ENCODE measurements at regions of chr12 and their contacts with region 1.

Region 1: GRCh38 chr12:26748741-26749431 is 84.1 kb downstream of the ITPR2 start:
- DNase-seq: peak; percentile 86
- ATAC-seq: peak; percentile 56
- H3K4me3 ChIP-seq: peak overlapping the region; percentile 32; the same call in 1 of the 2 replicates
- H3K27ac ChIP-seq: peak overlapping the region; percentile 91
- H3K4me1 ChIP-seq: peaks cover 64% of the 10 kb centered on the region
- H3K27me3 ChIP-seq: no peaks in the 10 kb centered on the region
- CTCF ChIP-seq: no peak
- EP300 ChIP-seq: peak; percentile 4 to 80
- POLR2A ChIP-seq: no peak
- RAD21 ChIP-seq: no peak

Region 2: DNA sequence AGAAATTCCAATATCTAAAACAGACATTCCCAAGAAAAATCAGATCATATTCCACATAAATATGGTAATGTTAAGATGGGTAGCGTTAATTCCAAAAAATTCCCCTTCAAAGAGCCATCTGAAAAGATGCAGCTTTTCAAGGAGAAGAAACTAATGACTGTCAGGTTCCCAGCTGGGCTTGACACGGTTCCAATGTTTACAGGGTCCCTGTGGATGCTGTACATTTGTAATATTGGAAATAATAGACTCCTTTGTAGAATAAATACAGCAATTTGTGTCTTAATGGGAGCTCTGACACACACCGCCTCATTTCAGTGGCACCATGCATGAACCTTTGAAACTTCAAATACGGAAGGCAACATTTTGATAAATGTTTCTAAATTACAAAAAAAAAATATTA is 56.5 kb before region 1 on chr12:
- CTCF ChIA-PET with region 1: no interaction called
- POLR2A ChIA-PET with region 1: no interaction called
- RAD21 ChIA-PET with region 1: no interaction called
- SMC1A ChIA-PET with region 1: no interaction called
- in situ Hi-C with region 1: no loop called
- intact Hi-C with region 1: no loop called
- DNase-seq: no peak
- ATAC-seq: no peak
- H3K4me3 ChIP-seq: no peak overlapping the region
- H3K27ac ChIP-seq: no peak overlapping the region
- H3K4me1 ChIP-seq: no peaks in the 10 kb centered on the region
- H3K27me3 ChIP-seq: no peaks in the 10 kb centered on the region
- CTCF ChIP-seq: no peak
- EP300 ChIP-seq: no peak
- POLR2A ChIP-seq: no peak
- RAD21 ChIP-seq: no peak

Region 3: GRCh38 chr12:26713885-26714383 is 35.0 kb before region 1 on chr12:
- CTCF ChIA-PET with region 1: interaction called, 5 read pairs
- POLR2A ChIA-PET with region 1: interaction called, 7 read pairs
- RAD21 ChIA-PET with region 1: interaction called, 14 read pairs
- SMC1A ChIA-PET with region 1: interaction called, 11 read pairs
- in situ Hi-C with region 1: no loop called
- intact Hi-C with region 1: no loop called
- DNase-seq: peak; percentile 48
- ATAC-seq: peak; percentile 87
- H3K4me3 ChIP-seq: no peak overlapping the region
- H3K27ac ChIP-seq: peak overlapping the region; percentile 69
- H3K4me1 ChIP-seq: peaks cover 22% of the 10 kb centered on the region
- H3K27me3 ChIP-seq: no peaks in the 10 kb centered on the region
- CTCF ChIP-seq: no peak
- EP300 ChIP-seq: peak in 1 of 2 experiments; percentile 74; a peak in 2 of 4 replicates
- POLR2A ChIP-seq: no peak
- RAD21 ChIP-seq: no peak

Region 4: GRCh38 chr12:26723379-26724308 is 25.2 kb before region 1 on chr12:
- CTCF ChIA-PET with region 1: interaction called, 3 read pairs
- POLR2A ChIA-PET with region 1: interaction called, 14 read pairs
- RAD21 ChIA-PET with region 1: interaction called, 16 read pairs
- SMC1A ChIA-PET with region 1: interaction called, 96 read pairs
- in situ Hi-C with region 1: no loop called
- intact Hi-C with region 1: loop called (anchors 2 kb)
- DNase-seq: no peak
- ATAC-seq: peak; percentile 43
- H3K4me3 ChIP-seq: no peak overlapping the region
- H3K27ac ChIP-seq: no peak overlapping the region
- H3K4me1 ChIP-seq: peaks cover 34% of the 10 kb centered on the region
- H3K27me3 ChIP-seq: no peaks in the 10 kb centered on the region
- CTCF ChIP-seq: no peak
- EP300 ChIP-seq: peak in 1 of 2 experiments; percentile 33; a peak in 1 of 4 replicates
- POLR2A ChIP-seq: no peak
- RAD21 ChIP-seq: no peak

Region 5: DNA sequence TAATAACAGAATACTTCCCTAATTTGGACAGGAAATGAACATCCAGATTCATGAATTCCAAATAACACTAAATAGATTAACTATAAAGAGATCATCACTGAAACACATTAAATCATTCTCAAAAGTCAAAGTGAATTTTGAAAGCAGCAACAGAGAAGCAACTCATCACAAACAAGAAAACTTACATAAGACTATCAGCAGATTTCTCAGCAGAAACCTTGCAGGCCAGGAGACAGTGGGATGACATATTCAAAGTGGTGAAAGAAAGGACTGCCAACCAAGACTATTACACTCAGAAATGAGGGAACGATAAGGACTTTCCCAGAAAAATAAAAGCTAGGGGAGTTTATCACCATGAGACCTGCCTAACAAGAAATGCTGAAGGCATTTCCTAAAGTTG is 13.3 kb after region 1 on chr12:
- CTCF ChIA-PET with region 1: interaction called, 7 read pairs
- POLR2A ChIA-PET with region 1: interaction called, 4 read pairs
- RAD21 ChIA-PET with region 1: interaction called, 4 read pairs
- SMC1A ChIA-PET with region 1: interaction called, 29 read pairs
- in situ Hi-C with region 1: no loop called
- intact Hi-C with region 1: no loop called
- DNase-seq: no peak
- ATAC-seq: no peak
- H3K4me3 ChIP-seq: no peak overlapping the region
- H3K27ac ChIP-seq: no peak overlapping the region
- H3K4me1 ChIP-seq: peaks cover under 1% of the 10 kb centered on the region; the same call in 1 of the 2 replicates
- H3K27me3 ChIP-seq: no peaks in the 10 kb centered on the region
- CTCF ChIP-seq: no peak
- EP300 ChIP-seq: no peak
- POLR2A ChIP-seq: no peak
- RAD21 ChIP-seq: no peak

Region 6: GRCh38 chr12:26791301-26791791 is 42.5 kb after region 1 on chr12:
- CTCF ChIA-PET with region 1: no interaction called
- POLR2A ChIA-PET with region 1: interaction called, 4 read pairs
- RAD21 ChIA-PET with region 1: no interaction called
- SMC1A ChIA-PET with region 1: interaction called, 15 read pairs
- in situ Hi-C with region 1: no loop called
- intact Hi-C with region 1: no loop called
- DNase-seq: peak; percentile 54
- ATAC-seq: peak; percentile 88
- H3K4me3 ChIP-seq: no peak overlapping the region
- H3K27ac ChIP-seq: peak overlapping the region; percentile 56
- H3K4me1 ChIP-seq: peaks cover 17% of the 10 kb centered on the region
- H3K27me3 ChIP-seq: no peaks in the 10 kb centered on the region
- CTCF ChIP-seq: no peak
- EP300 ChIP-seq: peak in 1 of 2 experiments; percentile 46; a peak in 1 of 4 replicates
- POLR2A ChIP-seq: no peak
- RAD21 ChIP-seq: no peak

Region 7: GRCh38 chr12:26845057-26845666 is 96.3 kb after region 1 on chr12:
- CTCF ChIA-PET with region 1: no interaction called
- POLR2A ChIA-PET with region 1: interaction called, 3 read pairs
- RAD21 ChIA-PET with region 1: no interaction called
- SMC1A ChIA-PET with region 1: interaction called, 10 read pairs
- in situ Hi-C with region 1: no loop called
- intact Hi-C with region 1: no loop called
- DNase-seq: no peak
- ATAC-seq: peak; percentile 43; the same call in 2 of the 3 replicates
- H3K4me3 ChIP-seq: no peak overlapping the region
- H3K27ac ChIP-seq: no peak overlapping the region
- H3K4me1 ChIP-seq: peaks cover 10% of the 10 kb centered on the region
- H3K27me3 ChIP-seq: no peaks in the 10 kb centered on the region
- CTCF ChIP-seq: peak; percentile 38 to 59 (median 56)
- EP300 ChIP-seq: no peak
- POLR2A ChIP-seq: no peak
- RAD21 ChIP-seq: peak; percentile 58